ENCODE measurements at regions of chr4 and their contacts with region 1.

Region 1: DNA sequence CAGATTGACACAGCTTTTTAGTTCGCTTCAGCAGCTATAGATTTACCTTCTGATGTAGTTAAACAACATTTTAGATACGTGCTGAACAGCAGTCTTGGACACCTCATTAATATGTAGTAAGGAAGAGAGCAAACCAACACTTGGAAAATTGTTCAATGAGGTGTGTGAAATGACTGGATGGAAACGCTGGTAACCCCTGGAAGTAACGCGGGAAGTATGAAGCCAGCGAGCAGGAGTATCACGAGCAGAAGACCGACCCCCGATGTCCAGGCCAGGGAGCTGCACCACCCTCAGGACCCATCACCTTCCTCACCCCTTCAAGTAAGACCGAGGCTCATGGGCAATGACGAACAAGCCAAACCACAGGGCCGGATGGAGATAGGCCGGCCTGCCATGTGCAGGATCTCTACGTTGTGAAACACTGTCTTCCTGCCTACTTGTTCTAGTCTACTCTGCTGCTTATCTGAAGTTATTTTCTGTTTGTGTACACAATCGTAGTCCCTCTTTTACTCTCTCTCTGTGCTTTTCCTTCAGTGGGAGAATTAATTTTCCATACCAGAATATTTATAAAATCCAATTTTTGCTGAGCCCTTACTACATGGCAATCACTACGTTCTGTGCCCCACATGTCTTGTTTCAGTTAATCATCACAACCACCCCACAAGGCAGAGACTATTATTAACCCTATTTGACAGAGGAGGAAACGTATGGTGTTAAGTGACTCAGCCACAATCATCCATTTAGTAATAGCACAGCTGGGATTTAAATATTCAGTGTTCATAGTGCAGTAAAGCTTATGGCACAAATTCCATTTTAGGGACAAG is 221.7 kb downstream of the APBB2 start:
- DNase-seq: no peak
- ATAC-seq: peak in 7 of 8 donors; percentile 42 to 69 (median 57)
- H3K4me3 ChIP-seq: no peak overlapping the region
- H3K27ac ChIP-seq: peak overlapping the region in 4 of 10 donors; percentile 17 to 56 (median 42)
- H3K4me1 ChIP-seq: peaks cover 0 to 41% (median 16%) of the 10 kb centered on the region in 9 donors
- H3K27me3 ChIP-seq: no peaks in the 10 kb centered on the region
- CTCF ChIP-seq: no peak

Region 2: DNA sequence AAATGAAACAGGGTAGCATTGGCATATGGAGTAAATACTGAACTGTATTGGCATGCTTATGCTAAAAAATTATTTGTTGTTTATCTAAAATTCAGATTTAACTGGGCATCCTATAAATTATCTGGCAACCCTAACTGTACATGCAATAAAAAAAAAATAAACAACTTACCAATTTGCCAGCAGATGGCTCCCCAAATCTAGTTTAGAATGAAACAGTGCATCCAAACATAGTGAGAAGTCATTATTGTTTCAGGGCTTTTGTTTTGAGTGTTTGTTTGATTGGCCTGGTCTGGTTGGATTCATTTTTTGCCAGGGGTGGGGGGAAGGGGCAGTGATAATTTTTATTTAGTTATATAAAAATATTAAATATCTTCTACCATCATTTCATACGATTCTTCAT is 255.8 kb before region 1 on chr4:
- intact Hi-C with region 1: no loop called
- DNase-seq: no peak
- ATAC-seq: no peak
- H3K4me3 ChIP-seq: no peak overlapping the region
- H3K27ac ChIP-seq: no peak overlapping the region
- H3K4me1 ChIP-seq: peaks cover 0 to 21% (median 2%) of the 10 kb centered on the region in 9 donors
- H3K27me3 ChIP-seq: peaks cover 0 to 9% (median 0%) of the 10 kb centered on the region in 7 donors
- CTCF ChIP-seq: peak in 7 of 9 donors; percentile 19 to 47 (median 40)

Region 3: GRCh38 chr4:41044165-41044564 is 51.5 kb after region 1 on chr4:
- intact Hi-C with region 1: loop called in 1 of 10 experiments (anchors 10 kb)
- DNase-seq: no peak
- ATAC-seq: no peak
- H3K4me3 ChIP-seq: no peak overlapping the region
- H3K27ac ChIP-seq: no peak overlapping the region
- H3K4me1 ChIP-seq: peaks cover 0 to 29% (median 0%) of the 10 kb centered on the region in 9 donors
- H3K27me3 ChIP-seq: no peaks in the 10 kb centered on the region
- CTCF ChIP-seq: no peak

Measured in heart right ventricle (tissue), 16 donors.